Mammary epithelial cell (primary cell): ENCODE measurements at regions of chr16 and their contacts with region 1.

Region 1: GRCh38 chr16:73735018-73735417 is 561.6 kb upstream of the PSMD7 start:
- DNase-seq: peak; percentile 96
- H3K4me3 ChIP-seq: no peak overlapping the region
- H3K27ac ChIP-seq: peak overlapping the region; percentile 89
- H3K4me1 ChIP-seq: peaks cover 39% of the 10 kb centered on the region
- H3K27me3 ChIP-seq: no peaks in the 10 kb centered on the region
- CTCF ChIP-seq: no peak

Region 2: DNA sequence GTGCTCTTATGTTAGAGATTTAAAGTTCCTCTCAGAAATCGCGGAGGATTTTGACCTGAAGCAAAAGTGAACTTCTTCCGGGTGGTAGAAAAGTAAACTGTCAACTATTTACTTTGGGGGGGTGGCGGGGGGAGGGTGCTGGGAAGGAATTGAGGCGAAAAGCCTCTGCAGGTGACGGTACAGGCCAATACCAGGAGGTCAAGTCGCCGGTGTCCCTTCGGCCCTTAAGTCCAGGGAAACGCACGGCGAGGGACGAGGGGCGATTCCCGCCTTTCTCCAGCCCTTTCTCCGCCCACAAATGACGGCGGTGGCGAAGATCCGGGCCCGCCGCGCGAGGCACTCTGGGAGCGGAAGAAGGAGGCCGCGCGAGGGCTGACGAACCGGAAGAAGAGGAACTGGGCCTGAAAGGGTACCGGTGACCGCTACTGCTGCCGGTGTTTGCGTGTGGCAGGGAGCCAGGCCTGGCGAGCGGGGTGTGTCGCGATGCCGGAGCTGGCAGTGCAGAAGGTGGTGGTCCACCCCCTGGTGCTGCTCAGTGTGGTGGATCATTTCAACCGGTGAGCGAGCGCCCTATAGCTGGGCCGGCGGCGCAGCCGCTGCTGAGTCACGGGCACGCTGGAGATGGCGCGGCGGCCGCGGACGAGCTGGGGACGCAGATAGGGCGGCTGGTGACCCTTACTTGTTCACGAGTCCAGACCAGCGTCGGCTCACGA is 561.6 kb after region 1 on chr16 and contains the start of gene PSMD7:
- CTCF ChIA-PET with region 1: no interaction called
- dilution Hi-C with region 1: no loop called
- in situ Hi-C with region 1: loop called in 1 of 2 experiments (anchors 25 kb)
- intact Hi-C with region 1: no loop called
- DNase-seq: peak; percentile 89
- H3K4me3 ChIP-seq: peak within 1 kb of the TSS; percentile 71 to 91 (median 78)
- H3K27ac ChIP-seq: peak within 1 kb of the TSS; percentile 77
- H3K4me1 ChIP-seq: peaks cover 22% of the 10 kb centered on the region
- H3K27me3 ChIP-seq: no peaks in the 10 kb centered on the region
- CTCF ChIP-seq: no peak
- total RNA-seq, gene PSMD7: 55.0 to 100 TPM